Spleen (tissue), 13 donors: ENCODE measurements at regions of chr1 and their contacts with region 1.

Region 1: GRCh38 chr1:157034137-157034800 is 11.3 kb downstream of the ARHGEF11 start:
- DNase-seq: no peak
- H3K4me3 ChIP-seq: no peak overlapping the region
- H3K27ac ChIP-seq: no peak overlapping the region
- H3K4me1 ChIP-seq: peaks cover 0 to 19% (median 2%) of the 10 kb centered on the region in 6 donors
- H3K27me3 ChIP-seq: peaks cover 0 to 6% (median 0%) of the 10 kb centered on the region in 7 donors
- CTCF ChIP-seq: no peak
- POLR2A ChIP-seq: no peak

Region 2: GRCh38 chr1:156927215-156928042 is 106.8 kb before region 1 on chr1:
- intact Hi-C with region 1: no loop called
- DNase-seq: peak; percentile 17
- H3K4me3 ChIP-seq: peak overlapping the region in 5 of 8 donors; percentile 12 to 59 (median 17)
- H3K27ac ChIP-seq: no peak overlapping the region
- H3K4me1 ChIP-seq: peaks cover 8 to 51% (median 29%) of the 10 kb centered on the region in 6 donors
- H3K27me3 ChIP-seq: peaks cover 2 to 86% (median 54%) of the 10 kb centered on the region in 7 donors
- CTCF ChIP-seq: peak in 9 of 11 experiments; percentile 15 to 61 (median 50)
- POLR2A ChIP-seq: no peak

Region 3: GRCh38 chr1:156959414-156959813 is 74.9 kb before region 1 on chr1:
- intact Hi-C with region 1: loop called (anchors 10 kb)
- DNase-seq: no peak
- H3K4me3 ChIP-seq: no peak overlapping the region
- H3K27ac ChIP-seq: no peak overlapping the region
- H3K4me1 ChIP-seq: peaks cover 0 to 29% (median 12%) of the 10 kb centered on the region in 6 donors
- H3K27me3 ChIP-seq: no peaks in the 10 kb centered on the region
- CTCF ChIP-seq: no peak
- POLR2A ChIP-seq: no peak